MCF 10A (cell line): ENCODE measurements at regions of chr9 and their contacts with region 1.

Region 1: DNA sequence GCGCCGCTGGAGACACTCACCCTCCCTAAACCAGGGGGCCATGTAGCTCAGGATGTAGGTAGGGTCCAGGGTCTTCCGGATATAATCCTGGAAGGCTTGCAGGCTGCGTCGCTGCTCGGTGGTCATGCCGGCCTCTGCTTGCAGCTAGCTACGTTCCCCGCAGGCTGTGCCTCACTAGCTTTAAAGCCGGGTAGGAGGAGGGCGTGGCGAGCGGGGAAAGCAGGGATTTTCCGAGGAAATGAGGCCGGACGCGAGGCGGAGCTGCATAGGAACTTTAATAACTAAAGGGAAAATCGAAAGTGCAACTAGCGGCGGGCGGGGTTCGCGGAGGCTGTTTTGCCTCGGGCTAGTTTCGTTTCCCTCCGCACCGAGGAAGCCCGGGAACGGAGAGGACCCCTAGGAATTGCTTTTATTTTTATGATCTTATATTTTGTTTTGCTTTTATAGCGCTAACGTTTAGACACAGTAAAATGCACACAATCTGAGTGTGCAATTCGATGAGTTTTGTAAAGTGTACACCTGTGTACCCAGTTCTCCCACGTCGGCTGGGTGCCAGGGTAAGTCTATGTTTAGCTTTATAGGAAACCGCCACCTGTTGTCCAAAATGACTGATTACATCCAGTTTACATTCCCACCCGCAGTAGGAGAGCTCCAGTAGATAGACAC is at the start of gene RIGI:
- DNase-seq: peak; percentile 96
- H3K4me3 Mint-ChIP-seq: peak within 1 kb of the TSS; percentile 82
- H3K27ac Mint-ChIP-seq: peak within 1 kb of the TSS; percentile 62
- H3K4me1 Mint-ChIP-seq: peaks cover 30% of the 10 kb centered on the region
- H3K27me3 Mint-ChIP-seq: no peaks in the 10 kb centered on the region
- CTCF ChIP-seq: peak; percentile 64
- total RNA-seq, gene RIGI: 3.0 and 3.2 TPM in 2 replicates

Region 2: DNA sequence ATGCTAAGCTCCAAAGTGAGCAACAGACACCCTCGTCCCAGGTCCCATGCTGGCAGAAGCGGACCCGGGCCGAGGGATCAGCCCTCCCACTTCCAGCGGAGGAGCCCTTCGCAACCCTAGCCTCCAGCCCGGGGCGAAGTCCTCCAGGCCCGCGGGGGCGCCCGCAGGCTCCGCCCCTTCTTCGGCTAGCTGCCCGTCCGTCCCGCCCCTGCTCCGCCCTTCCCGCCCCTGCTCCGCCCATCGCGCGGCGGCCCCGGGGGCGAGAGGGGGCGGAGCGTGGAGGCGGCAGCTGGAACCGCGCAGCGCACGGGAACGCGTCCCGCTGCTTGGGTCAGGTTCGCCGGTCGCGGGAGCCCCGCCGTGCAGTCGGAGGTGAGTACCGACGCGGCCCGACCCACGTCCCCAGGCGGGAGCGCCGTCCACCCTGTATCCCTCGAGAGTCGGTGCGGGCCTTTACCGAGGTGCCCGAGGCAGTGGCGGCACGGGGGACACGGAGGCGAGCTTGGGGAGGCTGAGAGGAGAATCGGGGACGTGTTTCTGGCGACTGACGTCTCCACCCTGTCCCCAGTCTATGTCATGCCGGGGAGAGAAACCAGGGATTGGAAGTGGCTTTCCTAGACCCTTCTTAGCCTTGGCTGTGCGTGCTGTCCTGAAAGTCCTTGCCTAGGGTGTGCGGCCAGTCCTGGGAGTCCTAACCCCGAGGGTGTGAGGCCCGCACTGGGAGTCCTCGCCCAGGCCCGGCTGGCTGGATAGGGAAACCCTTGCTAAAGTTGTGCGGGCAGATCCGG is 141.6 kb before region 1 on chr9 and contains the start of gene ACO1:
- CTCF ChIA-PET with region 1: interaction called, 84 read pairs
- POLR2A ChIA-PET with region 1: interaction called, 61 read pairs
- intact Hi-C with region 1: loop called (anchors 1 kb)
- DNase-seq: peak; percentile 83
- H3K4me3 Mint-ChIP-seq: peak within 1 kb of the TSS; percentile 84
- H3K27ac Mint-ChIP-seq: peak within 1 kb of the TSS; percentile 3
- H3K4me1 Mint-ChIP-seq: peaks cover 8% of the 10 kb centered on the region
- H3K27me3 Mint-ChIP-seq: peaks cover 14% of the 10 kb centered on the region
- CTCF ChIP-seq: no peak
- total RNA-seq, gene ACO1: 28.6 and 31.4 TPM in 2 replicates

Region 3: DNA sequence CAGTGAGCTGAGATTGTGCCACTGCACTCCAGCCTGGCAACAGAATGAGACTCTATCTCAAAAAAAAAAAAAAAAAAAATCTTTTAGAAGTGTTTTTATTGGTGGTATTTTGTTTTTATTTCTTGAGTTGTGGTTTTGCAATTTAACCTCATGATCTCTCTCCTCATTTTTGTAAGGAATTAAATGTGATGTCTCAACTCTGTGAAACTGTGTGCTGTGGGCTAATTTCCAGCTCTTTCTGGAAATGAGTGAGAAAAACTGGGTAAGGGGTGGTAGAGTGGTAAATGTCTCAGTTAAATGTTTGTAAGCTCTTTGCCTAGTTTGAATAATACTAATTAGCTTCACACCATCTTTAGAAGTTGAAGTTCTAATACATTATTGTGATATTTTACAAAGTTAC is 112.8 kb before region 1 on chr9:
- CTCF ChIA-PET with region 1: interaction called, 13 read pairs
- POLR2A ChIA-PET with region 1: no interaction called
- intact Hi-C with region 1: no loop called
- DNase-seq: peak; percentile 44
- H3K4me3 Mint-ChIP-seq: no peak overlapping the region
- H3K27ac Mint-ChIP-seq: peak overlapping the region; percentile 59
- H3K4me1 Mint-ChIP-seq: no peaks in the 10 kb centered on the region
- H3K27me3 Mint-ChIP-seq: no peaks in the 10 kb centered on the region
- CTCF ChIP-seq: no peak

Region 4: DNA sequence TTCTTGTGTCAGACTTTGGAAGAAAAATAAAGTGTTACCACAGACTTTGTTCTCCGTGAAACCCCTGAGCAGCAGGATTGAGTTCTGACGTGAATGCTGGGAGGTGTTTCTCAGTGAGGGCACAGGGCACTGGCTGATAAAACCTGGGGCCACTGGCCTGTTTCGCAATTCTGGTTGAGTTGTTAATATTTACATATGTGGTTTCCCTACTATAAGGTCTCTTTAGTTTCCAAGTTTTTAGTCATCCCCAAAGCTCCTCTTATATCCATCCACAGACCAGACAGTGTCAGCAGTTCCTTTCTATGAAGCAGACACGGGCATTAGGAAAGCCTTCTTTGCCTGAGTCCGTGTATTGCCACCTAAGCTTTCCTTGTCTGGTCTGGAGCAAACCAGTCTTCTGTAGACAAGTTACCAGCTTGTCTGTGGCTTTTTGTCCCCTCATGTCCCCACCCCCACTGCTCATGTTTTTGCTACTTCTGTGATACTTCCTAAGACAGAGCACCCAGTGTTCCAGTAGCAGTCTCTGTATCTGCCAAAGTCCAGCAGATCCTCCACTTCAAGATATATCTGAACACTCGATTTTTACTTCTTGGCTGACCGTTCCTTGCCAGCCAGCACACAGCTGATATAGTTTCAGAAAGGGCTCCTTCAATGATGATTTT is 99.8 kb before region 1 on chr9:
- CTCF ChIA-PET with region 1: no interaction called
- POLR2A ChIA-PET with region 1: no interaction called
- intact Hi-C with region 1: loop called (anchors 1 kb)
- DNase-seq: peak; percentile 88
- H3K4me3 Mint-ChIP-seq: no peak overlapping the region
- H3K27ac Mint-ChIP-seq: peak overlapping the region; percentile 79
- H3K4me1 Mint-ChIP-seq: no peaks in the 10 kb centered on the region
- H3K27me3 Mint-ChIP-seq: no peaks in the 10 kb centered on the region
- CTCF ChIP-seq: no peak

Region 5: GRCh38 chr9:32468740-32469139 is 57.4 kb before region 1 on chr9:
- CTCF ChIA-PET with region 1: interaction called, 12 read pairs
- POLR2A ChIA-PET with region 1: interaction called, 3 read pairs
- intact Hi-C with region 1: no loop called
- DNase-seq: no peak
- H3K4me3 Mint-ChIP-seq: no peak overlapping the region
- H3K27ac Mint-ChIP-seq: no peak overlapping the region
- H3K4me1 Mint-ChIP-seq: no peaks in the 10 kb centered on the region
- H3K27me3 Mint-ChIP-seq: no peaks in the 10 kb centered on the region
- CTCF ChIP-seq: no peak

Region 6: GRCh38 chr9:32550562-32551433 is 24.6 kb after region 1 on chr9:
- CTCF ChIA-PET with region 1: interaction called, 23 read pairs
- POLR2A ChIA-PET with region 1: interaction called, 74 read pairs
- intact Hi-C with region 1: loop called (anchors 1 kb)
- DNase-seq: peak; percentile 86
- H3K4me3 Mint-ChIP-seq: peak overlapping the region; percentile 98
- H3K27ac Mint-ChIP-seq: peak overlapping the region; percentile 94
- H3K4me1 Mint-ChIP-seq: peaks cover 13% of the 10 kb centered on the region
- H3K27me3 Mint-ChIP-seq: no peaks in the 10 kb centered on the region
- CTCF ChIP-seq: no peak

Region 7: GRCh38 chr9:32571969-32572899 is 46.1 kb after region 1 on chr9:
- CTCF ChIA-PET with region 1: interaction called, 12 read pairs
- POLR2A ChIA-PET with region 1: interaction called, 27 read pairs
- intact Hi-C with region 1: loop called (anchors 1 kb)
- DNase-seq: peak; percentile 84
- H3K4me3 Mint-ChIP-seq: peak overlapping the region; percentile 93
- H3K27ac Mint-ChIP-seq: peak overlapping the region; percentile 90
- H3K4me1 Mint-ChIP-seq: peaks cover 13% of the 10 kb centered on the region
- H3K27me3 Mint-ChIP-seq: no peaks in the 10 kb centered on the region
- CTCF ChIP-seq: peak; percentile 64